ENCODE measurements at regions of chr5 and their contacts with region 1.

Region 1: DNA sequence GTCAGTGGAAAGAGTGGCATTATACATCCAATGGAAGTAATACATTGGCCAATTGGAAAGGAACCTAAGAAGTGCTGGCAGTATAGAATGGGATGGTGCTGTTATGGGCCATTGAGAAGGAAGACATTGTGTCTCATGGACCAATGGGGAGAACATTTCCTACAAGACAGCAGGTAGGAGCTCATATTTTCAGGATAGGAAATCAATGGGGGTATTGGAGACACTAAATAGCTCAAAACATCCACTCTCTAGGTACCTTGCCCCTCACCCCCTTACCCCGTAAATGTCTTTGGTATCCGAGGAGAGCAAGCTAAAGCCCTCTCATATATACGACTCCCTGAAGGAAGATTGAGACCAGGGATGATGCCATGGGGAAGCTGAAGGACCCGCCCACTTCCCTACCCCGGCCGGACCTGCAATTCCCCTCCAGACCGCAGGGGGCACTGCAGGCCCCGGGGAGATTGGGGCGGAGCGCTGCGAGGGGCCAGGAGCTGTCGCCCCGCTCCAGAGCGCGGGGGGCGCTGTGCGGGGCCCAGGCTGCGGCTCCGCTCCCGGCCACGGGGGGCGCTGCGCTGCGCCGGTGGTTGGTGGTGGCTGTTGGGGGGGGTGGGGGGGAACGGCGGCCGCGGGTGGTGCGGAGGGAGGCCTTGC is at the start of gene KDM3B:
- DNase-seq: peak; percentile 95
- CTCF ChIP-seq: peak; percentile 100

Region 2: GRCh38 chr5:138185957-138186447 is 166.2 kb before region 1 on chr5:
- CTCF ChIA-PET with region 1: interaction called, 32 read pairs
- POLR2A ChIA-PET with region 1: no interaction called
- DNase-seq: peak; percentile 33
- CTCF ChIP-seq: no peak

Region 3: DNA sequence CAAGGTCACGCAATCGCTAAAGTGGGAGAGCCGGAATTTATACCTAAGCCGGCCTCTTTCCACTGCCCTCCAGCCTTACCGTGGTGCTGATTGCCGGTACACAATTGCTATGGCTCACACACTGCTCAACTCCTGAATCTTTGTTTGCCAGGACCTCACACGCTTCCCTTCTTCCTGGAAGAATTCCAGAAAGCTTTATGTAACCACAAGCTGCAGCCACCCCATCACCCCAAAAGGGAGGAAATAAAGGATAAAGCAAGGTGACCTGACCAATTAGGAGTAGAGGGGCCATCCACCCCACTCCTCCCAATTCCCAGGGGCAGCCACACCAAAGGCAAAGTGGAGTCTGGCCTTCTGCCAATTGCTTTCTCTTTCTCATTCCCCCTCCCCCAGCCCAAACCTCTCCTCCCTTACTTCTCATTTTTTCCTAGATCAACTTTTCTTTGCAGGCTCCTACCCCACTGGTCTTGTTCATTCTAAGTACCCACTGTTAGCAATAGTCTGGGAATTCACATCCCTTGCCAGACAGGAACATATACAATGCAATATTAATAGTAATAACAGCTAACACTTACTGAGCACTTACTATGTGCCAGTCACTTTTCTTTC is 121.1 kb before region 1 on chr5:
- CTCF ChIA-PET with region 1: interaction called, 6 read pairs
- POLR2A ChIA-PET with region 1: interaction called, 10 read pairs
- DNase-seq: no peak
- CTCF ChIP-seq: no peak

Region 4: DNA sequence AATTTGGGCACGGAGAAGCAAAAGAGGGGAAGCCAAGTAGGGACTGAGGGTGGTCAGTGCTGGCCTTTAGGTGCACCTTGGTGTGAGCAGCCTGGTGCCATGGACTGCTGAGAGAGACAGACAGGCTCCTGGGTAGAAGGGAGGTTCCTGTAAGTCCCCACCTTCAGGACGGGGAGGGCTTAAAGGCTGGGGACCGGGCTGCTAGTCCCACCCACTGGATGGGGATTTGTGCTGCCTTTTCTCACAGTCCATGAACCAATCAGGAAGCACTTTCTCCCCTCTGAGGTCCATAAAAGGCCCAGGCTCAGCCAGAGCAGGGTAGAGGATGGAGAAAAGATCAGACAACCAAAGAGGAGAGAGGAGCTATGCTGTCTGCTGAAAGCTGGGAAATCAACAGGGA is 35.8 kb before region 1 on chr5:
- CTCF ChIA-PET with region 1: interaction called, 17 read pairs
- POLR2A ChIA-PET with region 1: no interaction called
- DNase-seq: no peak
- CTCF ChIP-seq: no peak

Region 5: GRCh38 chr5:138369706-138370105 is 17.5 kb after region 1 on chr5:
- CTCF ChIA-PET with region 1: interaction called, 238 read pairs
- POLR2A ChIA-PET with region 1: interaction called, 4 read pairs
- DNase-seq: no peak
- CTCF ChIP-seq: no peak

Region 6: DNA sequence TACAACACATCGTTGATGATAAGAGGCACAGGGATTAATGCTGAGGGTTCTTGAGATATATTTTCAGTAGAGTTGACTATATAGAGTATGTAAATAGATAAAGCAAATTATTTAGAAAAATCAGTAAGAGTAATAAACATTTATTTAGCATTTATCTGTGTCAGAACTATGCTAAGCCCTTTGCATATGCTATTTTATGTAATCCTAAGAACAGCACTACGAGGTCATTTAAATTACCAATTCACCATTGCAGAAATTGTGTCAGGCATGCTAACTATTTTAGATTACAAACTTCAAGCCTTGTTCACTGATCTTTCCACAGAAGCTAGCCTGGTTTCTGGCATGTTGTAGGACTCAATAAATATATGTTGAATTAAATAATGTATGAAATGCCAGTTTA is 66.2 kb after region 1 on chr5:
- CTCF ChIA-PET with region 1: interaction called, 17 read pairs
- POLR2A ChIA-PET with region 1: no interaction called
- DNase-seq: no peak
- CTCF ChIP-seq: no peak

Region 7: GRCh38 chr5:138610918-138611677 is 258.9 kb after region 1 on chr5:
- CTCF ChIA-PET with region 1: no interaction called
- POLR2A ChIA-PET with region 1: no interaction called
- DNase-seq: peak; percentile 42
- CTCF ChIP-seq: peak; percentile 6

Region 8: GRCh38 chr5:138668376-138669079 is 316.3 kb after region 1 on chr5:
- CTCF ChIA-PET with region 1: no interaction called
- POLR2A ChIA-PET with region 1: no interaction called
- DNase-seq: no peak
- CTCF ChIP-seq: no peak